Mucosa of descending colon (tissue), 3 donors: ENCODE measurements at regions of chr4 and their contacts with region 1.

Region 1: GRCh38 chr4:57163530-57164459 is 53.6 kb upstream of the IGFBP7 start:
- DNase-seq: peak; percentile 76 to 87 (median 85)
- ATAC-seq: peak; percentile 98
- H3K4me3 ChIP-seq: no peak overlapping the region
- H3K4me1 ChIP-seq: no peaks in the 10 kb centered on the region
- CTCF ChIP-seq: peak; percentile 73

Region 2: DNA sequence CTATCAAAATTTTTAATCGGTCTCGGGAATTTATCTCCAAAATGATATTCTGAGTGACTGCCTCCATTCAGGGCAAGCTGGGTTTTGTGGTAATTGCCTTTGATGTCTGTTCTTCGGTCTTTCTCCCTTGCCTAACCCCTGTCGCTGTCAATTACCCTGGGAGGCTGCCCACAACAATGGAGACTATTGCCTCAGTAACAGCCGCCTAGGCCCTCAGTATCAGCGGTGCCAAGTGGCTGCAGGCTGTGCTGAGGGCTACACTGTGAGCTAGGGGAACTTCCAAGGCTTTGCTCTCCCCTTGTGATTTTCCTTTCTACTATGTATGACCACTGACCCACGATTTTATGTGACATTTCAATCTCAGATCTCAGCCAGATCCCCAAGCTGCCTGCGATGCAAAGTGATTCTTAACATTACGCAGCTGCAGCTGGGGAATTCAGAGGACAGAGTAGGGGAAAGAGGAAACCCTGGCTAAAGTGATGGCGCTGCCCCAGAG is 292.4 kb before region 1 on chr4:
- intact Hi-C with region 1: no loop called
- DNase-seq: no peak
- ATAC-seq: no peak
- H3K4me3 ChIP-seq: no peak overlapping the region
- H3K4me1 ChIP-seq: no peaks in the 10 kb centered on the region
- CTCF ChIP-seq: no peak

Region 3: DNA sequence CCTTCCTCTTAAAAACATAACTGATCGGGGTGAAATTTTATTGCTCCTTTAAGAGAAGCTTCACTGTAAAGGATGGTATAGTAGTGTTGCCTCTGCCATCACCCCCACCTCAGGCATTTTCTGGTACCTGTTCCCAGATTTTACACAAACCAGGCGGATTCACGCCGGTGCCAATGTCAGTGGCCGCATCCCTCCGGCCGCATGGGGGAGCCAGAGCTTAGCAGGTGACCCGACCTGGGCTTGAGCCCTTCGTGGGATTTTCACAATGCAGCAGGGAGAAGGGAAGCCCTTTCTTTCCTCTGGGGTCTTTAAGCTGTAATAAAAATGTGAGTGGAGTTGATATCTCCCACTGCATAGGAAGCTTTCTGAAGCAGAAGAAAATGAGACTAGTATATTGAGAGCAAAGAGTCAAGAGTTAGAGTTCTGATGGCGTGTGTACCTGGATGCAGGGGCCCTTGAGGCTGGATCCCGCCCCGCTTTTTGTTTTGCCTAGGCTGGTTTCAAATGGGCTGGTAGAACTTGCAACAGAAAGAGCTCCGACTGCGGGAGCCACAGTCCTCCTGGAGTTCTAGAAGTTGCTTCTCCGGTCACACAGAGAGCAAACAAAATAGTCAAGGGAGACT is 125.7 kb before region 1 on chr4:
- intact Hi-C with region 1: loop called in 1 of 2 experiments (anchors 5 kb)
- DNase-seq: peak in 2 of 3 donors; percentile 78 to 84
- ATAC-seq: peak; percentile 89
- H3K4me3 ChIP-seq: no peak overlapping the region
- H3K4me1 ChIP-seq: no peaks in the 10 kb centered on the region
- CTCF ChIP-seq: peak; percentile 67

Region 4: DNA sequence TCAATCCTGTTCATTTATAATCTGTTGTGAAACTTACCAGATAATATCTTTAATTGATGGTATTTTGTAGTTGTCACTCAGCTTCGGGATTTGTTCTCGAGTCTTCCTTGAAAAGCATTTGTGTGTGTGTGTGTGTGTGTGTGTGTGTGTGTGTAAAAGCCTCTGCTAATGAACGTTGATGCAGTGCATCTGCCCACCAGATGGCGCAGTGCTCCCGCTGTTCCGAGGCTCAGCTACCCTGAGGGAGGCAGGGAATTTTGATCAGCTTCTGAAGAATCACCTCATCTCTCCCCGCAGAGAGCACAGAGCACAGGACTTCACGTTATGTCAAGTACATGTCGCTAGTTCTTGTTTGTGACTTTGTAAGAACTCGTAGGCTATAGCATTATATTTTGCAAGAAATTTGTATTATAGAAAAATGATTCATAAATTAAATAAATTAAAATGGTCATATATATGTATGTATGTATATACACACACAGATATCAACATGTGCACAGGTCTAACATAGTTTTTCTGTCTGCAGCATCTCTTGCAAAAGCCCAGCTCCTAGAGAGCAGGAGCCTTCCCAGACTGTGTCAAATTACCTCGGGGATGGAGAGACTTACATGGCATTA is 263.1 kb after region 1 on chr4:
- intact Hi-C with region 1: loop called in 1 of 2 experiments (anchors 10 kb)
- DNase-seq: peak; percentile 50 to 77 (median 75)
- ATAC-seq: peak; percentile 79
- H3K4me3 ChIP-seq: no peak overlapping the region
- H3K4me1 ChIP-seq: no peaks in the 10 kb centered on the region
- CTCF ChIP-seq: peak; percentile 24